ENCODE measurements at regions of chr10 and their contacts with region 1.

Region 1: GRCh38 chr10:5293691-5294550 is 70.8 kb upstream of the UCN3 start:
- DNase-seq: peak; percentile 87
- H3K4me3 Mint-ChIP-seq: peak overlapping the region; percentile 94
- H3K27ac Mint-ChIP-seq: peak overlapping the region; percentile 98
- H3K4me1 Mint-ChIP-seq: peaks cover 82% of the 10 kb centered on the region
- H3K27me3 Mint-ChIP-seq: no peaks in the 10 kb centered on the region

Region 2: DNA sequence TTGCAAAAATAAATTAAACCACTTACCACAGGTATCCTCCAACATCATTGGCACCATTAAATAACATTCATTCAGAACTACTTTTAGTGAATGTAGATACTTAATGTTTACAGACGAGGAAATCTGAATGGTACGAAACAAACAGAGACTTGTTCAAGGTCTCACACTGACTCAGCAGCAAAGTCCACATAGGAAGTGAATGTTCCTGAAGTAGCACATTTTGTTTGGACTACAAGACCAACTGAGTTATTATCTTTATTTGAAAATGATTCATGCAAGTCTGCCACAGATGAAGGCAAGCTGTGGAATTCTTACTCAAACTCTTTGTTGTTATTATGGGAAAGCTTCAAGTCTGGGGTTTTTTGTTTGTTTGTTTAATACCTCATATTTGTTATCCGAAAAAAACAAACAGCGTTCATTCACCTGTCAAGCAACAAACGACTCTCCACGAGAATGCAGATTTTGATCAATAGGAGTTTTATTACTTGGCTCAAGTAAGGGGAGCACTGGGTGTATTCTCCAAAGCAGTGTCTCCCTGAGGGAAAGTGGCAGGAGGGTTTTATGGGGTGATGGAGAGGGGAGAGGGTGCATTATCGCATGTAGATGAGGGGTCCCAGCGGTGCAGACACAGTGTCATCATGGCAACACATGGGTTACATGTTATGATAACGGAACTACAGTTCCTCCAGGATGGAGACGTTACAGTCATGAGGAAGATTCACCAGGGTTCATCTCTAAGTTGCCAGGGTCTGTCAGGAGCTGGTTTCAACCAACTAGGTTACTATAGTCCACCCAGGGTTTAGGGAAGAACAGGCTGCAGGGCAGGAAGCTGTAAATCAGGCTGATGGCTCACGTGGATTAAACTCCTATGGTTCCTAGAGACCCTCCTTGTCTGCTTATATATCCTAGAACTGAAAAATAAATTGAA is 615.6 kb before region 1 on chr10:
- CTCF ChIA-PET with region 1: no interaction called
- POLR2A ChIA-PET with region 1: no interaction called
- DNase-seq: no peak
- H3K4me3 Mint-ChIP-seq: no peak overlapping the region
- H3K27ac Mint-ChIP-seq: no peak overlapping the region
- H3K4me1 Mint-ChIP-seq: no peaks in the 10 kb centered on the region
- H3K27me3 Mint-ChIP-seq: peaks cover 33% of the 10 kb centered on the region

Region 3: GRCh38 chr10:5283305-5284158 is 10.4 kb before region 1 on chr10:
- CTCF ChIA-PET with region 1: interaction called, 27 read pairs
- POLR2A ChIA-PET with region 1: interaction called, 26 read pairs
- DNase-seq: peak; percentile 73
- H3K4me3 Mint-ChIP-seq: no peak overlapping the region
- H3K27ac Mint-ChIP-seq: peak overlapping the region; percentile 87
- H3K4me1 Mint-ChIP-seq: peaks cover 42% of the 10 kb centered on the region
- H3K27me3 Mint-ChIP-seq: no peaks in the 10 kb centered on the region

Region 4: DNA sequence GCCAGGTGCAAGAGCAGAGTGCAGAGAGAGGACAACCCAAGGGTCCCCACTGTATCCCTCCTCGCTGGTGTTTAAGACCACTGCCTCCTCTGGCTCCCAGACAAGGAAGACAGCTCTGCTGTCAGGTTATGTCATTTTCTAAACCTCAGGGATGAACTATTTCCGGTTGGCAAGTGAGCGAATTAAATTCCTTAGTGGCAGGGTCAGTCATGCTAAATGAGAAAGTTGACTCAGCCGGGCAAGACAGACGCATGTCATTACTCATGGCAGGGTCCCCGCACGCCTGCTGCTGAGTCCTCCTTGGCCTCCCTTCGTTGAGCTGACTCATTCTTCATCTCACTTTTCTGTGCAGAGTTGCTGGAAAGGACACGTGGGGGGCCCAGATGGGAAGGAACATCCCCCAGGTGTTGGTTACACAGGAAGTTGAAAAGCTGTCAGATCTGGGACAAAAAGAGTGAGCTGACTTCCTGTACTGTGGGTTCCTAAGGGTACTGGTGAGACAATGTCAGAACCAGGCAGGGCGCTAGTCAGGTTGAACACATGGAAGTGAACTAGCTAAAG is 23.7 kb after region 1 on chr10:
- CTCF ChIA-PET with region 1: interaction called, 4 read pairs
- POLR2A ChIA-PET with region 1: interaction called, 16 read pairs
- DNase-seq: peak; percentile 76
- H3K4me3 Mint-ChIP-seq: no peak overlapping the region
- H3K27ac Mint-ChIP-seq: peak overlapping the region; percentile 75
- H3K4me1 Mint-ChIP-seq: peaks cover 62% of the 10 kb centered on the region
- H3K27me3 Mint-ChIP-seq: no peaks in the 10 kb centered on the region

Measured in activated CD4-positive, alpha-beta memory T cell treated with anti-CD3 and anti-CD28 coated beads, Interleukin-2, amount 10 ng/mL, durations not matched to agents 7 days and 5 days (primary cell).